ENCODE measurements at regions of chr17 and their contacts with region 1.

Region 1: DNA sequence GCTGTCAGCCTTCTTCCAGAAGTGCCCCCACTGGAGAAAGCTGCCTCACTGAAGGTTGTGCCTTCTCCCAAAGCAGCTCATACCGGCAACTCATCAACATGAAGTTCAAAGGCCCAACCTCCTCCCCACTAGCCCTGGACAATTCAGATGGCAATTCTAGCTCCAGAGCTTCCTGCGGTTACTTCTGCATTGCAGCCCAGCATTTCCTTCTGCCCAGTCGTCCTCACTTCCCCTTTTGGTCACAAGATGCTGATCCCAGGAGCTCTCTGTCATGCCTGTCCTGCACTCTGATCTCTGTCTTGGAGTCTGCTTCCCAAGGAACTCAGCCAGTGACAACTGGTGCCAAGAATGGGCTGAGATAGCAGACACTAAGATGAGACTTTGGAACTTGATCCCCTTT is 178.2 kb upstream of the SOX9 start:
- DNase-seq: no peak
- CTCF ChIP-seq: no peak

Region 2: DNA sequence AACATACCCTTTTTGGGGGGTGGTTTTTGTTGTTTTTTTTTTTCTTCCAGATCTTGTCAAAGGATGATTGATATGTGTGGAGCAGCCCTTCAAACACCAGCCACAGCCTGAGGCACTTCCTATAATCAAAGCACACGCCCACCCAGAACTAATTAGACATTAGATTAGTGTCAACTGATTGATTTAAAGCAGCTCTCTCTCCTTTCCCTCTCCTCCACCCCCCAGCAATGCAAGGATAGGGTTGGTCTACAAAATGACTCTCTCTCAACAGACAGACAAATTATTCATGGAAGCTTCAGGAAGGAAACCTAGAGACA is 72.1 kb before region 1 on chr17:
- CTCF ChIA-PET with region 1: no interaction called
- POLR2A ChIA-PET with region 1: interaction called, 10 read pairs
- DNase-seq: no peak
- CTCF ChIP-seq: no peak

Measured in GM10248 (cell line).